AG04449 (cell line): ENCODE measurements at regions of chr4 and their contacts with region 1.

Region 1: GRCh38 chr4:26719954-26720552 is 136.2 kb downstream of the TBC1D19 start:
- DNase-seq: no peak
- H3K4me3 ChIP-seq: no peak overlapping the region
- CTCF ChIP-seq: peak; percentile 43

Region 2: DNA sequence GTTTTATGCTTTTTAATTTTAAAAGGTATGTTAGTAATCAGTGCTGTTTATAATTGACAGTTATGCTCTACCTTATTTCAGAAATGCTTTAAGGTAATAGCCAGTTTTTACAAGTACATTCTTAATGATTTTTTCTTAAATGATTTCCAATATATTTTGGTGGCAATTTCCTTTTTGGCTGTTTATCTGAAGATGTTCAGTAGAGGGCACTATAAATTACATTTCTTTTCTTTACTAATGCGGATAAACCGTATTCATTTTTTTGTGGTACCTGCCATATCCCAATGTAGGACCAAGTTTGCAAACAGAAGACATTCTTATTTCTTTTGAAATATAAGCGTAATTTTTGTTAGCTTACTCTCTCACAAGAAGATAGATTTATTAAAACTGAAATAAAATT is 295.2 kb before region 1 on chr4:
- CTCF ChIA-PET with region 1: interaction called, 14 read pairs
- POLR2A ChIA-PET with region 1: no interaction called
- DNase-seq: no peak
- H3K4me3 ChIP-seq: no peak overlapping the region
- CTCF ChIP-seq: no peak

Region 3: DNA sequence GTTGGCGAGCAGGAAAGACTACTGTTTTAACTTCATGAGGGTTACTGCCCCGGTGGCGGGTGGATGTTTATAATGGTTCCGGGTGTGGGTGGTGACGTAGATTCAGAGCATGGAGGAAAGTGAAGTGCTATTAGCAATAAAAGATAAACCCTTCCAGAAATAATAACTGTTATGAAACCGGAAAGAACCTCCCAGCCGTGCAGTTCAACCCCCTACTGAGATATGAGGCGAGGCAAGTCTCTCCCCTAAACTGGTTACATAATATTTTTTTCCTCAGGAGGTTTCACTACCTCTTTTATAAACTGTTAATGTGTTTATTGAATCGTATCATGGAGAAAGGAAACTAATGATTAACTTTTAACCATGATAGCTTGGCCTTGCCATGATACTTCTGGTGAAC is 106.7 kb after region 1 on chr4:
- CTCF ChIA-PET with region 1: no interaction called
- POLR2A ChIA-PET with region 1: no interaction called
- DNase-seq: no peak
- H3K4me3 ChIP-seq: no peak overlapping the region
- CTCF ChIP-seq: no peak